MCF 10A (cell line): ENCODE measurements at regions of chr6 and their contacts with region 1.

Region 1: GRCh38 chr6:617445-618100 is 39.3 kb downstream of the HUS1B start:
- DNase-seq: no peak
- H3K4me3 Mint-ChIP-seq: no peak overlapping the region
- H3K27ac Mint-ChIP-seq: no peak overlapping the region
- H3K4me1 Mint-ChIP-seq: no peaks in the 10 kb centered on the region
- H3K27me3 Mint-ChIP-seq: no peaks in the 10 kb centered on the region
- CTCF ChIP-seq: no peak

Region 2: DNA sequence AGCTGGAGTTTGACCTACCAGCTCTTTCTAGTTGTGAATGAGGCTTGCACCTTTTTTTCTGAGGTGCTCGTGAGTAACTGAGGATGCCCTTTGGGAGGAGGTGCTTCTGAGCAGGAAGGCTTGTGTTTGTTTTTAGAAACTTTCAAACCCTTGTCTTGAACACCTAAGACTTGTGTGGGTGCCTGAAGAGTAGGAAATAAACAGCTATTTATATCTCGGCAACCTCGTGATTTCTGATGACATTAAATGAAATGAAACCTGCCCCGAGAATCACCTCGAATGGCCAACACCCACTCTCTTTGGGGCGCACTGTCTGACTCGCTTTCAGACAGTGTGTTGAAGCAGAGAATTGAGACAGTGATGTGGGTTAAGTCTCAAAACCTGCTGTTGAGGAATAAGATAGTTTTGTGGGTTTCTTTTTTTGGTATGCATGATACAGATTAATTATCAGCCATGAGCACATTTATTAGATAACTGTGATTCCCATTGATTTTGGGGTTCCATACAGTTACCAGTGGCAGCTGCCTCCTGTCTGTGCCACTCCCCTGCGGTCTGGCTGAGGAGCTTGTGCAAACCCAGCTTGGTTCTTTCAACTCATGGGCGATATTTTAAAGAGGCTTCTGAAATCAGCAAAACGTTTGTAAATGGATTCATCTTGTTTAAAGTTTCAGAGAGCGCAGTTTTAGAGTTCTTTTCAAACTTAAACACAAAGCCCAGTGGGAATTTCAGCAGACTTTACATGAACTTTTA is 217.6 kb before region 1 on chr6:
- CTCF ChIA-PET with region 1: no interaction called
- POLR2A ChIA-PET with region 1: no interaction called
- intact Hi-C with region 1: no loop called
- DNase-seq: no peak
- H3K4me3 Mint-ChIP-seq: no peak overlapping the region
- H3K27ac Mint-ChIP-seq: no peak overlapping the region
- H3K4me1 Mint-ChIP-seq: no peaks in the 10 kb centered on the region
- H3K27me3 Mint-ChIP-seq: peaks cover 38% of the 10 kb centered on the region
- CTCF ChIP-seq: no peak

Region 3: GRCh38 chr6:568954-569523 is 48.5 kb before region 1 on chr6:
- CTCF ChIA-PET with region 1: no interaction called
- POLR2A ChIA-PET with region 1: no interaction called
- intact Hi-C with region 1: loop called (anchors 2 kb)
- DNase-seq: no peak
- H3K4me3 Mint-ChIP-seq: no peak overlapping the region
- H3K27ac Mint-ChIP-seq: no peak overlapping the region
- H3K4me1 Mint-ChIP-seq: no peaks in the 10 kb centered on the region
- H3K27me3 Mint-ChIP-seq: no peaks in the 10 kb centered on the region
- CTCF ChIP-seq: no peak

Region 4: GRCh38 chr6:604579-604978 is 13.0 kb before region 1 on chr6:
- CTCF ChIA-PET with region 1: no interaction called
- POLR2A ChIA-PET with region 1: no interaction called
- intact Hi-C with region 1: no loop called
- DNase-seq: no peak
- H3K4me3 Mint-ChIP-seq: no peak overlapping the region
- H3K27ac Mint-ChIP-seq: no peak overlapping the region
- H3K4me1 Mint-ChIP-seq: no peaks in the 10 kb centered on the region
- H3K27me3 Mint-ChIP-seq: no peaks in the 10 kb centered on the region
- CTCF ChIP-seq: no peak

Region 5: DNA sequence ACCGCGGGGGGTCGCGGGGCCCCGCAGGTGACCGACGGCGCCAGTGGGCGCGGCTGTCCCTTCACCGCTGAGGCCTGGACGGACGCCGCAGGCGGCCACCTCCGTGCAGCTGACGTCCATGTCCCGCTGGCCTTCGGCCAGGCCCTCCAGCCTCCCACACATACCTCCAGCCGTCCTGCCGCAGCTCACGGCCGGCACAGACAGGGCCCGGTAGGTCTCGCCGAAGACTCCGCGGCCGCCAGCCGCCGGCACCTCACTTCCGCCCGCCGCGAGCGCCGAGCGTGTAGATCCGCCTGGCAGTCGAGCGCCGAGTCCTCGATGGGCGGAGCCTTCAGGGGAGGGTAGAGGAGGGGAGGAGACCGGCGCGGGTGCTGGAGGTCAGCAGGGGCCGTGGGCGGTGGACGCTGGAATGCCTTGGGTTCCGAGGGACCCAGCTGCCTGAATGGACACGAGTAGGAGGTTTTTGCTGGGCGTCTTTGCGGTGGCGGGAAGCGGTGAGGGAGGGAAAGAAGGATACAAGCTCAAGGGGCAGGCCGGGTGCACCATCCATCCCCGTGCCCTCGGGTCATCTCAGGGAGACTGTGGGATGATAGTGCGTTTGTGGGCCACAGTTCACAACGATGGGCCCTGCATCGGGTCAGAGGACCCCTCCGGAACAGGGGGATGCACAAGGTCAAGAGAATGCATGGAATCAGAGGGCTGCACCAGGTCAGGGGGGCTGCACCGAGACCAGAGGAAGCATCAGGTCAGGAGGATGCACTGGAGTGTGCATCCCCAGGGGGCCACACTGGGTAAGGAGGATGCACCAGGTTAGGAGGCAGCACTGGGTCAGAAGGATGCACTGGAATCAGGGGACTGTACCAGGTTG is 75.5 kb after region 1 on chr6 and contains the start of gene EXOC2:
- CTCF ChIA-PET with region 1: no interaction called
- POLR2A ChIA-PET with region 1: interaction called, 4 read pairs
- intact Hi-C with region 1: loop called (anchors 2 kb)
- DNase-seq: peak; percentile 85
- H3K4me3 Mint-ChIP-seq: peak within 1 kb of the TSS; percentile 93
- H3K27ac Mint-ChIP-seq: peak within 1 kb of the TSS; percentile 82
- H3K4me1 Mint-ChIP-seq: peaks cover 16% of the 10 kb centered on the region
- H3K27me3 Mint-ChIP-seq: no peaks in the 10 kb centered on the region
- CTCF ChIP-seq: no peak
- total RNA-seq, gene EXOC2: 14.6 and 18.9 TPM in 2 replicates

Region 6: DNA sequence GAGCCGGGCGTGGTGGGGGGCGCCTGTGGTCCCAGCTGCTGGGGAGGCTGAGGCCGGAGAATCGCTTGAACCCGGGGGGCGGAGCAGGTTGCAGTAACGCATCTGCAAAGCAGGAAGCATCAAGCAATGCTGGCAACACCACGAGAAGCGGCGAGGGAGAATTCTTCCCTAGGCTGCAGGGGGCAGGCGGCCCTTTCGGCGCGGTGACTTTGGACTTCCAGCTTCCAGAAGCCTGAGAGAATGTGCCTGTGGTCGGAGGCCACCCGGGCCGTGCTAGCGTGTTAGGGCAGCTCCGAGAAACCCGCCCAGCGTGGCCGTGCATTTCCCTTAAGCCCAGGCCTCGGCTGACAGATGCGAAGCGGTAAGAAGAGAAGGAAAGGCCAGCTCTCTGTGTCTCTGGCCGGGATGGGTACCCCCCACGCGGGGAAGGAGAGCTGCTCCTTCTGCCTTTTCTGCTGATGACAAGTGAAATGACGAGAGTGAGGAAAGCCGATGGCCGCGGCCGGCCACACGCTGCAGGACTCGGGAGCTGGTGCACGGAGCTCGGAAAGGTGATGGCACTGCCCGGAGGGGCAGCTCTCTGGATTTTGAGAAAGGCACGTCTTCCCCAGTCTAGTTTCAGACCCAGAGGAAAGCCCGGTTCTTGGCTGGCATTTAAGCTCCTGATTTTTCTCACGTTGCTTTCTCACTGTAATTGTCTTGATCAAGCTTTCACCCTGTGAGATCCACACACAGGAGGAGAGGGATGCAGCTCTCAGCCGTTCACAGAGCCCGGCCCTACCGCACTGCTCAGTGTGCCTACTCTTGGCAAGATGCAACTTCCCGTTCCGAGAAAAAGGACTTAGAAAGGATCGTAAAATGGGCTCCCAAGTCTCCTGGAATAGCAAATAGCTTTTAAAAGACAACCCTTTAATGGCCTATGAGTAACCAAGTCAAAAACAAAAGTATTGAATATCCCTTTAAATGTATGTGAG is 143.7 kb after region 1 on chr6:
- CTCF ChIA-PET with region 1: no interaction called
- POLR2A ChIA-PET with region 1: no interaction called
- intact Hi-C with region 1: no loop called
- DNase-seq: no peak
- H3K4me3 Mint-ChIP-seq: no peak overlapping the region
- H3K27ac Mint-ChIP-seq: no peak overlapping the region
- H3K4me1 Mint-ChIP-seq: no peaks in the 10 kb centered on the region
- H3K27me3 Mint-ChIP-seq: peaks cover 24% of the 10 kb centered on the region
- CTCF ChIP-seq: no peak